ENCODE measurements at regions of chr13 and their contacts with region 1.

Region 1: DNA sequence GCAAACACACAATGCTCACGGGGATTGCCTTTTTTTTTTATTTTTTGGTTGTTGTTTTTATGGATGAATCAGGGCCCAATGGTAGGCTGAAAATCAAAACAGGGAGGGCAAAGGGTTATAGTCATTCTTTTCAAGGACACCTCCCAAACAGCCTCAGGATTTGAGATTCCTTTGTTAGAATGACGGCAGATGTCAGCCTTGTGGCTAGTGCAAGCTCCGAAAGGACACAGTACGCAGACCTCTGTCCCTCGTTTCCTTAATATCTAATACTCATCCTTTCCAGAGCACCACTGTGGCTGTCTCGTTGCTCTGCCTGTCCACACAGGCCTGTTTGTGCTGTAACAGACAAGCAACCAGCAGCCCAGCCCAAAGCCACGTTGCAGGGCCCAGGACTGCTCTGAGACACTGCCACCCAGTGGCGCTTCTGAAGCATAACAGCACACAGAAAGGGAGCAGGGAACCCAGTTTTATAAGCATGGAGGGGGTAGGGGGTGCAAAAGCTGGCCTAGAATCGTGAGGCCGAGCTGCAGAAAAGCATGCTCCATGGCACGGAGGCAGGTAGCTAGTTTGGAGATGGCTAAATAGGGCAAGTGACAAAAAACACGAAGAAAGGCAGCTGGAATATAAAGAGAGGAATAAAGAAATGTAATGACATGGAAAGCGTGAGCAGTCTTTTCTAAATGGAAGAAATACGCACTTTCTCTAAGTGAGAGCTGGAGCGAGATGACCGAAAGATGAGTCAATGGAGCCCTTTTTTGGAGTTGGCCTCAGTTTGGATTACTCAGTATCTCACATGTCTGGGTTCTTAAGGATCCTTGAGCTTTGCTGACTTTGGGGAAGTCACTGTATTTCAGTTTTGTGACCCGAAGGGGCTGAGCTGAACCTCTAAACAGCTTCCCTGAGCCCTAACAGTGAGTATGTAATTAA is 40.7 kb upstream of the MEDAG start:
- DNase-seq: peak; percentile 73
- ATAC-seq: peak; percentile 99
- H3K4me3 Mint-ChIP-seq: no peak overlapping the region
- H3K27ac Mint-ChIP-seq: no peak overlapping the region
- H3K4me1 Mint-ChIP-seq: peaks cover 3% of the 10 kb centered on the region
- H3K27me3 Mint-ChIP-seq: peaks cover 11% of the 10 kb centered on the region
- CTCF ChIP-seq: peak; percentile 91

Region 2: GRCh38 chr13:30802953-30803478 is 62.4 kb before region 1 on chr13:
- CTCF ChIA-PET with region 1: interaction called, 11 read pairs
- POLR2A ChIA-PET with region 1: no interaction called
- intact Hi-C with region 1: no loop called
- DNase-seq: peak; percentile 88
- ATAC-seq: peak; percentile 99
- H3K4me3 Mint-ChIP-seq: peak overlapping the region; percentile 43
- H3K27ac Mint-ChIP-seq: no peak overlapping the region
- H3K4me1 Mint-ChIP-seq: peaks cover 9% of the 10 kb centered on the region
- H3K27me3 Mint-ChIP-seq: no peaks in the 10 kb centered on the region
- CTCF ChIP-seq: peak; percentile 98

Region 3: GRCh38 chr13:30818323-30818960 is 46.9 kb before region 1 on chr13:
- CTCF ChIA-PET with region 1: no interaction called
- POLR2A ChIA-PET with region 1: no interaction called
- intact Hi-C with region 1: loop called (anchors 5 kb)
- DNase-seq: no peak
- ATAC-seq: no peak
- H3K4me3 Mint-ChIP-seq: no peak overlapping the region
- H3K27ac Mint-ChIP-seq: no peak overlapping the region
- H3K4me1 Mint-ChIP-seq: peaks cover 3% of the 10 kb centered on the region
- H3K27me3 Mint-ChIP-seq: peaks cover 4% of the 10 kb centered on the region
- CTCF ChIP-seq: no peak

Region 4: DNA sequence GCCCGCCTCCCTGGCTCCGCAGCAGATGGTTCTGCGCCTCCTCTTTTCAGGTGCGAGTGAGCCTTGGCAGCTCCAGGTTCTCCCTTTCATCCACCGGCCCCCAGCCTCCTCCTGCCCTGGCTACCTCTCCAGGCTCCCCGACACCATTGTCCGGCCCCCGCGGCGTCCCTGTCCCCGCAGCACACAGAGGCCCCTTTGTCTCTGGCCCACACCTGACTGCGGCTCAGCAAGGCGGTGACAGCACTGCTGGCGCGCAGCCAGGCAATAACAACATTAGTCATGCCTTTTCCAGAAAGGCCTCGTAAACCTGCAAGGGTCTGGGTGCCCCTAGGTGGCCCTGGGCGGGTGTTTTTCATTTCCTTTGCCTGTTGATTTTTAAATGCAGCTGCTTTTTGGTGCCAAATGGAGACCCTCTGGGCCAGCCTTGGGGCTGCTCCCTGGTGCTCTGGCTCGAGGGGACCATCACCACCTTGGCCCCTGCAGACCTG is 32.5 kb before region 1 on chr13:
- CTCF ChIA-PET with region 1: interaction called, 11 read pairs
- POLR2A ChIA-PET with region 1: no interaction called
- intact Hi-C with region 1: no loop called
- DNase-seq: peak; percentile 85
- ATAC-seq: peak; percentile 94
- H3K4me3 Mint-ChIP-seq: no peak overlapping the region
- H3K27ac Mint-ChIP-seq: no peak overlapping the region
- H3K4me1 Mint-ChIP-seq: peaks cover 2% of the 10 kb centered on the region
- H3K27me3 Mint-ChIP-seq: peaks cover 11% of the 10 kb centered on the region
- CTCF ChIP-seq: no peak

Region 5: DNA sequence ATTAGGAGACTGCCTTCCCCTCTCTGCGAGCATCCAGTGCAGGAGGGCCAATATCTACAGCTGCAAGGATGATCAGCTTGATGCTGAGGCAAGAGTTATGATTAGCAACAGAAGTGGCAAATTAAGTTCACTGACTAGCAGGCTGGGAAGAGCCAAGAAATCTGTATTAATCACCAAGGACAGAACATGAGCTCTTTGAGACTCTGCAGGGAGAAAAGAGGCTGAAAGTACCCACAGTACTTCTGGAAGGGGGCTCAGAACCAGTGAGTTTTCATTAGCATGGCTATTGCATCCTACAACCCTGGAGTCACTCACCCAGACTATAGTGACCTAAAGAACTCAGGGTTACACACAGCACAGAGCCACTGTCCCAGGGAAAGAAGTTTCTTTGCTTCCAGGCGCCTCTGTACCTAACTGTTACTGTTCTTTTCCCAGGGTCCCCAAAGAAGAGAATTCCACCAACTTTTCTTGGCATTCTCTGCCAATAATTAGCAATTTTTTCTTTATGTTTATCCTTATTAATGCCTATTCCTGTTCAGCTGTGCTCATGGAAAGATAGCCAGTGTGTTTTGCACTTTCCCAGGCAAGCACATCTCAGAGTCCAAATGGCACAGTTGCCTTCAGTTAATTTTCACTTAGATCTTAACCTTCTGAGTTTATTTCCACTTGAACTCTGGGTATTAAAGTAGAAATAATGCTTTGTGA is 14.9 kb after region 1 on chr13:
- CTCF ChIA-PET with region 1: interaction called, 15 read pairs
- POLR2A ChIA-PET with region 1: no interaction called
- intact Hi-C with region 1: no loop called
- DNase-seq: no peak
- ATAC-seq: no peak
- H3K4me3 Mint-ChIP-seq: no peak overlapping the region
- H3K27ac Mint-ChIP-seq: no peak overlapping the region
- H3K4me1 Mint-ChIP-seq: peaks cover 14% of the 10 kb centered on the region
- H3K27me3 Mint-ChIP-seq: peaks cover 21% of the 10 kb centered on the region
- CTCF ChIP-seq: no peak

Region 6: GRCh38 chr13:30927595-30927994 is 62.2 kb after region 1 on chr13:
- CTCF ChIA-PET with region 1: no interaction called
- POLR2A ChIA-PET with region 1: no interaction called
- intact Hi-C with region 1: no loop called
- DNase-seq: peak; percentile 12
- ATAC-seq: peak; percentile 55
- H3K4me3 Mint-ChIP-seq: no peak overlapping the region
- H3K27ac Mint-ChIP-seq: no peak overlapping the region
- H3K4me1 Mint-ChIP-seq: peaks cover 15% of the 10 kb centered on the region
- H3K27me3 Mint-ChIP-seq: peaks cover 37% of the 10 kb centered on the region
- CTCF ChIP-seq: no peak

Measured in activated CD8-positive, alpha-beta T cell treated with anti-CD3 and anti-CD28 coated beads for 36 hours (primary cell).